Gastrocnemius medialis (tissue), 4 donors: ENCODE measurements at regions of chr15 and their contacts with region 1.

Region 1: DNA sequence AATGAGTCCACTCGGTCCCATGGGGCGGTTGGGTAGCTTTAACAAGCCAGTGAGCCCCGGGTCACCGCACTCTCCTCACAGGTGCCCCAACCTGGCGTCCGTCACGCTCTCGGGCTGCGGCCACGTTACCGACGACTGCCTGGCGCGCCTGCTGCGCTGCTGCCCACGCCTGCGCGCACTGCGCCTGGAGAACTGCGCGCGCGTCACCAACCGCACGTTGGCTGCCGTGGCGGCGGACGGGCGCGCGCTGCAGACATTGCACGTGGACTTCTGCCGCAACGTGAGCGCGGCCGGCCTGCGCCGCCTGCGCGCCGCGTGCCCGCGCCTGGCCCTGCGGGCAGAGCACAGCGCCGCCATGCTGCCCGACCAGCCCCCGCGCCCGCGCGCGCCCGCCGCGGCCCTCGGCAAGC is 3.4 kb downstream of the FBXL22 start:
- DNase-seq: peak; percentile 74 to 87
- ATAC-seq: peak; percentile 63 to 69
- H3K4me3 ChIP-seq: peak overlapping the region; percentile 74 to 89 (median 84)
- H3K27ac ChIP-seq: peak overlapping the region; percentile 89 to 96 (median 96)
- H3K4me1 ChIP-seq: peaks cover 52 to 53% of the 10 kb centered on the region in 2 donors
- H3K27me3 ChIP-seq: no peaks in the 10 kb centered on the region
- CTCF ChIP-seq: peak in 4 of 5 experiments; percentile 24 to 57 (median 42)
- POLR2A ChIP-seq: peak; percentile 80 to 82

Region 2: GRCh38 chr15:63277038-63277892 is 323.4 kb before region 1 on chr15 and contains the start of gene APH1B:
- in situ Hi-C with region 1: loop called in 1 of 4 experiments (anchors 25 kb)
- intact Hi-C with region 1: loop called (anchors 10 kb)
- DNase-seq: peak; percentile 64 to 68
- ATAC-seq: peak; percentile 68 to 81
- H3K4me3 ChIP-seq: peak within 1 kb of the TSS; percentile 84 to 99 (median 92)
- H3K27ac ChIP-seq: peak within 1 kb of the TSS; percentile 82 to 89 (median 86)
- H3K4me1 ChIP-seq: peaks cover 0 to 3% of the 10 kb centered on the region in 2 donors
- H3K27me3 ChIP-seq: no peaks in the 10 kb centered on the region
- CTCF ChIP-seq: no peak
- POLR2A ChIP-seq: peak; percentile 26 to 53
- total RNA-seq, gene APH1B: 2.4 to 5.6 (median 2.9) TPM

Region 3: DNA sequence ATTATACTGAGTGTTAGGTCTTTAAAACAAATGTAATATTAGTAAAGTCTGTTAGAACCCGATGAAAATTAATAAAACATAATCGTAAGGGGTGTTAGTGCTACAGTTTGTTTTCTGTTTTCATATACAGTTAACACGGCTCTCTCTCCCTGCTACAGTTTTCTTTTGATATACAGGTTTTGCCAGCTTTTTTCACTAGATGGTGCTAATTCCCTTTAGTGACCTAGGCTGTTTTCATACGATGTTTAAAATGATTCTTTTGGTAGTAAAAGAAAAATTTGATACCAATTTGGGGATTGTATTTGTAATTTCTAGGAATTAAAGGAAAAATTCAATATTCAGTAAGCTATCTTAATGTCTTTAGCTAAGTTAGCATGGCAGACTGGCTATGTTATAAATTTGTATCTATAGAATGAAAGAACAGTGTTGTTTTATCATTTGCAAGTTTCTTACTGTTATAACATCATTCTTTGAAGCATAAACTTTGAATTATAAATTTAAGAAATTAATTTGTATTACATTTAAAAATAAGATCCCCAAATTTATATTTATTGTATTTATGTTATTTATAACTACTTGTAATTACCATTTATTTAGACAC is 311.7 kb before region 1 on chr15:
- in situ Hi-C with region 1: loop called in 1 of 4 experiments (anchors 25 kb)
- intact Hi-C with region 1: loop called (anchors 10 kb)
- DNase-seq: no peak
- ATAC-seq: peak; percentile 61 to 74
- H3K4me3 ChIP-seq: no peak overlapping the region
- H3K27ac ChIP-seq: no peak overlapping the region
- H3K4me1 ChIP-seq: peaks cover 0 to 5% of the 10 kb centered on the region in 2 donors
- H3K27me3 ChIP-seq: no peaks in the 10 kb centered on the region
- CTCF ChIP-seq: peak in 4 of 5 experiments; percentile 38 to 71 (median 69)
- POLR2A ChIP-seq: no peak

Region 4: GRCh38 chr15:63466378-63467192 is 134.0 kb before region 1 on chr15:
- in situ Hi-C with region 1: loop called in 1 of 4 experiments (anchors 10 kb)
- intact Hi-C with region 1: loop called (anchors 1 kb)
- DNase-seq: peak in 1 of 2 donors; percentile 18
- ATAC-seq: peak; percentile 91 to 93
- H3K4me3 ChIP-seq: no peak overlapping the region
- H3K27ac ChIP-seq: no peak overlapping the region
- H3K4me1 ChIP-seq: no peaks in the 10 kb centered on the region
- H3K27me3 ChIP-seq: no peaks in the 10 kb centered on the region
- CTCF ChIP-seq: peak; percentile 32 to 63 (median 58)
- POLR2A ChIP-seq: no peak

Region 5: GRCh38 chr15:63487076-63487757 is 113.4 kb before region 1 on chr15:
- in situ Hi-C with region 1: loop called in 2 of 4 experiments (anchors 10 kb)
- intact Hi-C with region 1: loop called (anchors 5 kb)
- DNase-seq: peak; percentile 70 to 78
- ATAC-seq: peak; percentile 88 to 90
- H3K4me3 ChIP-seq: no peak overlapping the region
- H3K27ac ChIP-seq: no peak overlapping the region
- H3K4me1 ChIP-seq: no peaks in the 10 kb centered on the region
- H3K27me3 ChIP-seq: no peaks in the 10 kb centered on the region
- CTCF ChIP-seq: peak; percentile 76 to 94 (median 82)
- POLR2A ChIP-seq: no peak

Region 6: GRCh38 chr15:63504247-63504978 is 96.2 kb before region 1 on chr15 and contains the start of gene USP3:
- in situ Hi-C with region 1: no loop called
- intact Hi-C with region 1: loop called (anchors 1 kb)
- DNase-seq: peak; percentile 92 to 95
- ATAC-seq: peak; percentile 74 to 77
- H3K4me3 ChIP-seq: peak within 1 kb of the TSS; percentile 72 to 88 (median 82)
- H3K27ac ChIP-seq: peak within 1 kb of the TSS; percentile 96 to 99 (median 97)
- H3K4me1 ChIP-seq: peaks cover 54 to 59% of the 10 kb centered on the region in 2 donors
- H3K27me3 ChIP-seq: no peaks in the 10 kb centered on the region
- CTCF ChIP-seq: peak; percentile 35 to 61 (median 49)
- POLR2A ChIP-seq: peak; percentile 91 to 94
- total RNA-seq, gene USP3: 12.1 to 29.4 (median 15.5) TPM

Region 7: GRCh38 chr15:64067564-64068030 is 467.0 kb after region 1 on chr15:
- in situ Hi-C with region 1: loop called in 1 of 4 experiments (anchors 25 kb)
- intact Hi-C with region 1: loop called (anchors 5 kb)
- DNase-seq: peak; percentile 37 to 61
- ATAC-seq: peak; percentile 11 to 19
- H3K4me3 ChIP-seq: no peak overlapping the region
- H3K27ac ChIP-seq: peak overlapping the region in 2 of 4 donors; percentile 4 to 94
- H3K4me1 ChIP-seq: peaks cover 22 to 34% of the 10 kb centered on the region in 2 donors
- H3K27me3 ChIP-seq: no peaks in the 10 kb centered on the region
- CTCF ChIP-seq: peak; percentile 78 to 93 (median 87)
- POLR2A ChIP-seq: no peak